GM12878 (cell line): ENCODE measurements at regions of chr10 and their contacts with region 1.

Region 1: GRCh38 chr10:44932517-44933450 is 21.6 kb downstream of the TMEM72 start:
- DNase-seq: peak; percentile 53
- ATAC-seq: peak; percentile 99
- H3K4me3 ChIP-seq: no peak overlapping the region
- H3K27ac ChIP-seq: peak overlapping the region; percentile 13; the same call in 1 of the 2 replicates
- H3K4me1 ChIP-seq: peaks cover 8% of the 10 kb centered on the region
- H3K27me3 ChIP-seq: no peaks in the 10 kb centered on the region
- CTCF ChIP-seq: peak; percentile 97 to 99 (median 99); a peak in 5 of 6 replicates
- EP300 ChIP-seq: no peak
- POLR2A ChIP-seq: no peak
- RAD21 ChIP-seq: peak; percentile 98

Region 2: GRCh38 chr10:44947371-44948152 is 14.8 kb after region 1 on chr10:
- CTCF ChIA-PET with region 1: interaction called, 58 read pairs
- POLR2A ChIA-PET with region 1: interaction called, 6 read pairs
- RAD21 ChIA-PET with region 1: interaction called, 34 read pairs
- SMC1A ChIA-PET with region 1: interaction called, 65 read pairs
- in situ Hi-C with region 1: no loop called
- intact Hi-C with region 1: no loop called
- DNase-seq: peak; percentile 80
- ATAC-seq: peak; percentile 79
- H3K4me3 ChIP-seq: peak overlapping the region; percentile 16; the same call in 1 of the 2 replicates
- H3K27ac ChIP-seq: peak overlapping the region; percentile 67
- H3K4me1 ChIP-seq: peaks cover 51% of the 10 kb centered on the region
- H3K27me3 ChIP-seq: no peaks in the 10 kb centered on the region
- CTCF ChIP-seq: no peak
- EP300 ChIP-seq: no peak
- POLR2A ChIP-seq: no peak
- RAD21 ChIP-seq: no peak

Region 3: DNA sequence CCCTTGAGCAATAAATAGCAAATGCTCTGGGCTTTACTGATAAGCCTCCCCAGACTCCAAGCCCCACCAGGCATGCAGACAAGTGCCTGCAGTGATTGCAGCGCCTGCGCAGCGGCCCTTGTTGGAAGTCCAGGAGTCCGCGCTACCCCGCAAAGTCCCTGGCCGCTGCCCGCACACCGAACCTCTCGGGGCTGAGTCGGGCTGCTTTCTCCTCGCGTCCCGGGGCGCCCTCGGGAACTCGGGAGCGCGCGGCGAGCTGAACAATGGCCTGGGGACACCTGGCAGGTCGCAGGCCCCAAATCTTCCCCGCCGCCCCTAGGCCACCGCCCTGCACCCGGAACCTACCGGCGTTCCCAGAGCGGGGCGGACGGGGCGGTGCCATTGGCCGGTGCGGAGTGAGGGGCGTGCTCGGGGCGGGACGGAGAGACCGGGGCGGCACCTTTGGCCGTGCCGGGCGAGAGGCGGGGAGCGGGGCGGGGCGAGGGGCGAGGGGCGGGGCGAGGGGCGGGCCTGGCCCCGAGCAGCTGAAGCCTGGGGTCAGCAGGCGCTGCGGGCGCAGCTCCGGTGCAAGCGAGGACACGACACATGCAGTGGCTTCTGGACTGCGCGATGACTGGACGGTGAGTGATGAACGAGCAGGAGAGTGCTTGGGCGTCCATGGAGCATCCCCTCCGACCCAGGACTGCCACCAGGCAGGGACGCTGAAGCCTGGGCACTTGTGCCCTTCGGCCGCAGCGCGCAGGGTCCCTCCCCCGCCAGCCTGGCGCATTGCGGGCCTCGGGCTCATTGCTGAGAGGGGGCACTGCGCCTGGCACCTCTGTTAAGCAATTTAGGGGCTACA is 26.7 kb after region 1 on chr10 and contains the start of gene RASSF4:
- CTCF ChIA-PET with region 1: interaction called, 116 read pairs
- POLR2A ChIA-PET with region 1: interaction called, 4 read pairs
- RAD21 ChIA-PET with region 1: interaction called, 38 read pairs
- SMC1A ChIA-PET with region 1: interaction called, 92 read pairs
- in situ Hi-C with region 1: no loop called
- intact Hi-C with region 1: no loop called
- DNase-seq: no peak
- ATAC-seq: peak; percentile 92
- H3K4me3 ChIP-seq: peak within 1 kb of the TSS; percentile 92
- H3K27ac ChIP-seq: peak within 1 kb of the TSS; percentile 71
- H3K4me1 ChIP-seq: peaks cover 43% of the 10 kb centered on the region
- H3K27me3 ChIP-seq: no peaks in the 10 kb centered on the region
- CTCF ChIP-seq: no peak
- EP300 ChIP-seq: no peak
- POLR2A ChIP-seq: peak; percentile 98
- RAD21 ChIP-seq: no peak
- polyA plus RNA-seq, gene RASSF4: 3.7 to 4.0 TPM

Region 4: GRCh38 chr10:44974628-44975431 is 42.0 kb after region 1 on chr10:
- CTCF ChIA-PET with region 1: interaction called, 181 read pairs
- POLR2A ChIA-PET with region 1: interaction called, 12 read pairs
- RAD21 ChIA-PET with region 1: interaction called, 62 read pairs
- SMC1A ChIA-PET with region 1: interaction called, 40 read pairs
- in situ Hi-C with region 1: loop called (anchors 5 kb)
- intact Hi-C with region 1: loop called (anchors 1 kb)
- DNase-seq: no peak
- ATAC-seq: peak; percentile 86
- H3K4me3 ChIP-seq: peak overlapping the region; percentile 67; the same call in 1 of the 2 replicates
- H3K27ac ChIP-seq: peak overlapping the region; percentile 80
- H3K4me1 ChIP-seq: peaks cover 50% of the 10 kb centered on the region
- H3K27me3 ChIP-seq: no peaks in the 10 kb centered on the region
- CTCF ChIP-seq: peak; percentile 78 to 95 (median 94); a peak in 5 of 6 replicates
- EP300 ChIP-seq: 0 out of 4 replicates have a peak, but pooled peaks of 1 of the 2 experiments have one; percentile 23
- POLR2A ChIP-seq: peak; percentile 46
- RAD21 ChIP-seq: peak; percentile 79

Region 5: GRCh38 chr10:45000752-45001380 is 68.1 kb after region 1 on chr10 and contains the start of gene ZNF22:
- CTCF ChIA-PET with region 1: interaction called, 30 read pairs
- POLR2A ChIA-PET with region 1: no interaction called
- RAD21 ChIA-PET with region 1: interaction called, 24 read pairs
- SMC1A ChIA-PET with region 1: interaction called, 48 read pairs
- in situ Hi-C with region 1: no loop called
- intact Hi-C with region 1: loop called (anchors 2 kb)
- DNase-seq: no peak
- ATAC-seq: peak; percentile 82
- H3K4me3 ChIP-seq: peak within 1 kb of the TSS; percentile 72
- H3K27ac ChIP-seq: peak within 1 kb of the TSS; percentile 74
- H3K4me1 ChIP-seq: peaks cover 10% of the 10 kb centered on the region
- H3K27me3 ChIP-seq: no peaks in the 10 kb centered on the region
- CTCF ChIP-seq: peak in 2 of 3 experiments; percentile 16 to 18; a peak in 3 of 6 replicates
- EP300 ChIP-seq: no peak
- POLR2A ChIP-seq: peak; percentile 88
- RAD21 ChIP-seq: no peak
- polyA plus RNA-seq, gene ZNF22: 47.4 to 74.4 TPM

Region 6: DNA sequence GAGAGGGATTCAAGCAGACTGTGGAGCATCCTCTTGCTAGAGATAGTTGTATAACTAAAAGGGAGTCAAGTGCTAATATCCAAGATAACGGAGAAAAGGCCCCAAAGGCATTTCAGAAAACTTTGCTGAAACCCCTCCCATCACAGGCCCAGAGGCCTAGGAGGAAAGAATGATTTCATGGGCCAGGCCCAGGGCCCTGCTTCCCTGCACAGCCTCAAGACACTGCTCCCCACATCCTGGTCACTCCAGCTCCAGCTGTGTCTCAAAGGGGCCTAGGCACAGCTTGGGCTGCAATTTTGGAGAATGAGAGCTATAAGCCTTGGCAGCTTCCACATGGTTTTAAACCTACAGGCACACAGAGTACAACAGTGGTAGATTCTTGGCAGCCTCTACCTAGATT is 297.0 kb after region 1 on chr10:
- CTCF ChIA-PET with region 1: interaction called, 7 read pairs
- POLR2A ChIA-PET with region 1: no interaction called
- RAD21 ChIA-PET with region 1: interaction called, 13 read pairs
- SMC1A ChIA-PET with region 1: interaction called, 3 read pairs
- in situ Hi-C with region 1: no loop called
- intact Hi-C with region 1: loop called (anchors 5 kb)
- DNase-seq: no peak
- ATAC-seq: no peak
- H3K4me3 ChIP-seq: no peak overlapping the region
- H3K27ac ChIP-seq: no peak overlapping the region
- H3K4me1 ChIP-seq: no peaks in the 10 kb centered on the region
- H3K27me3 ChIP-seq: no peaks in the 10 kb centered on the region
- CTCF ChIP-seq: no peak
- EP300 ChIP-seq: no peak
- POLR2A ChIP-seq: no peak
- RAD21 ChIP-seq: no peak